Sciatic nerve (tissue), 2 donors: ENCODE measurements at regions of chr20 and their contacts with region 1.

Region 1: DNA sequence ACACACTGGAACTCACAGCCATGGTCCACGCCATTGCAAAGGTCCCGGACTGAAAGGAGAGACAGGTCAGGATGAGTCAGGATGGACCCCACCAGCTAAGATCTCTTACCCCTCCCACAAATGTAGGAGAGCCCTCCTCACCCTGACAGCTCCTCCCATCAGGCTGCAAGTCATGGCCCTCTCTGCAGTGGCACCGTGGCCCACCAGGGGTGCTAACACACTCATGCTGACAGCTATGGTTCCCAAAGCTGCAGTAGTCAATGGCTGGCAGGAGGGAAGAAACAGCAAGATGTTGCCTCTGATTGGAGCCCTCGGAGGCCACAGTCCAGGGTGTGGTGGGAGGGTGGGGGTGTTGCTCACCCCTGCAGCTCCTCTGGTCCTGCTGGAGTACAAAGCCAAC is 5.7 kb upstream of the RBPJL start:
- DNase-seq: no peak
- ATAC-seq: no peak

Region 2: DNA sequence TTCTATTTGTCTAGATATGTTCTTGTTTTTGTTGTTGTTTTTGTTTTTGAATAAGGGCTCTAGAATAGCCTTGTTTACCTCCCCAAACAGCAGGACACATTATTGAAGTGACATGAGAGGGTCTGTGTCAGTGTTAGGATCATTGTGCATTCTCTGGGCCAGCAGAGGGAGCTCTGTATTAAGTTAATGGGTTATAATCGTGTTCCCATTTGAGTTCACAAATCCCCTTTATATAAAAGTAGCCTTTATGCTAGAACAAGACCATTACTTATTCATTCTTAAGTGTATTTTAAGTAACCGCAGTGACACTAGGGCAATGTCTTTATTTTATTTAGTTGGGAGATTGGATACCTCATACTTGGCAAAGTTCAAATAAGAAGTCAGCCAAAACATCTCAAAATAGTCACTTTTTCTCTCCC is 289.8 kb before region 1 on chr20:
- intact Hi-C with region 1: loop called (anchors 10 kb)
- DNase-seq: peak; percentile 78
- ATAC-seq: peak; percentile 92